Activated CD4-positive, alpha-beta memory T cell treated with anti-CD3 and anti-CD28 coated beads for 36 hours (primary cell): ENCODE measurements at regions of chr10 and their contacts with region 1.

Region 1: GRCh38 chr10:11170993-11171851 is 153.6 kb downstream of the CELF2 start:
- DNase-seq: peak; percentile 83
- H3K4me3 Mint-ChIP-seq: no peak overlapping the region
- H3K27ac Mint-ChIP-seq: no peak overlapping the region
- H3K4me1 Mint-ChIP-seq: peaks cover 39% of the 10 kb centered on the region
- H3K27me3 Mint-ChIP-seq: no peaks in the 10 kb centered on the region

Region 2: DNA sequence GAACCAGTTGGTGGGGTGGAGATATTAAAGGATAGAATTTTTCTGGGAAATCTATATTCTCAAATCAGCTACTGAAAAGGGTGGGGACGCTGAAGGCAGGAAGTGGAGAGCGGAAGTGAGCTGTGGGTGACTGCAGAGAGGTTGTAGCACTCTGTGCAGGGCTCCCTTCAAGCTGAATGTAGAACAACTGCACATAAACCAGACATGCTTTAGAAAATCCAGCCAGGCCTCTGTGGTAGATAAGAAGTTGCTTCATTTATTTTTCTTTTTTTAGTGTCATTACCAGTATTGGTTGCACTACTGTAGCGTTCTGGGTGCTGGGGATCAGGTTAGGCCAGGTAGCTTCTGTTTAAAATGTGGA is 25.7 kb before region 1 on chr10:
- CTCF ChIA-PET with region 1: interaction called, 96 read pairs
- POLR2A ChIA-PET with region 1: interaction called, 170 read pairs
- intact Hi-C with region 1: loop called (anchors 1 kb)
- DNase-seq: peak; percentile 78
- H3K4me3 Mint-ChIP-seq: peak overlapping the region; percentile 64
- H3K27ac Mint-ChIP-seq: peak overlapping the region; percentile 93
- H3K4me1 Mint-ChIP-seq: peaks cover 86% of the 10 kb centered on the region
- H3K27me3 Mint-ChIP-seq: no peaks in the 10 kb centered on the region

Region 3: GRCh38 chr10:11225935-11226334 is 54.7 kb after region 1 on chr10:
- CTCF ChIA-PET with region 1: interaction called, 9 read pairs
- POLR2A ChIA-PET with region 1: interaction called, 40 read pairs
- intact Hi-C with region 1: loop called (anchors 1 kb)
- DNase-seq: peak; percentile 88
- H3K4me3 Mint-ChIP-seq: peak overlapping the region; percentile 62
- H3K27ac Mint-ChIP-seq: peak overlapping the region; percentile 97
- H3K4me1 Mint-ChIP-seq: peaks cover 95% of the 10 kb centered on the region
- H3K27me3 Mint-ChIP-seq: no peaks in the 10 kb centered on the region

Region 4: DNA sequence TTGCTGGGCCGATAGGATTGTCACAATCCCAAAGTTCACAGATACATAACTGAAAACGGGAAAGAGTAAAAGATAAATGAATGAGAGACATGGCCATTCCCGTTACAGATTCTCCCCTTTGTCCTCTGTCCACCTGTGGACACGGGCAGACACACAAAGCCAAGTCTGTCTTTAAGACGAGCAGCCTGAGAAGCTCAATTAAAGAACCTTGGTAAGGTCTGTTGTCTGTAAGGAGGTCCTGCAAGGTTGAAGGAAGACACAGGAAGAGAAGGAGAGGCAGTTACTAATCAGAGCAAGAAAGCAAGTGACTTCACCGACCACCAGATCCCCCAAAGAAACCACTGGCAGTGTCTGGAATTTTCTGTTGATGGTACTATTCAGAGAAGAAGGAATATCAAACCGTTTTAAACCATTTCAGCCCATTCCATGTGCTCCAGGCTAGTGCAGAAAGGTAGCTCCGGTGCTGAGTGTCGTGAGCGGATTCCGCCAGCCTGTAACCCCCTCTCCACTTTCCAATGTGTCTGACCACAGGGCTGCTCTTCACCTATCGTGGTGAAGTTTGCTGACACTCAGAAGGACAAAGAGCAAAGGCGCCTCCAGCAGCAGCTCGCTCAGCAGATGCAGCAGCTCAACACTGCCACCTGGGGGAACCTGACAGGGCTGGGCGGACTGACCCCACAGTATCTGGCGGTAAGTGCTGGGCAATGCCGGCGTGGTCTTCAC is 99.1 kb after region 1 on chr10:
- CTCF ChIA-PET with region 1: interaction called, 33 read pairs
- POLR2A ChIA-PET with region 1: interaction called, 11 read pairs
- intact Hi-C with region 1: loop called (anchors 1 kb)
- DNase-seq: peak; percentile 85
- H3K4me3 Mint-ChIP-seq: peak overlapping the region; percentile 25
- H3K27ac Mint-ChIP-seq: peak overlapping the region; percentile 52
- H3K4me1 Mint-ChIP-seq: peaks cover 90% of the 10 kb centered on the region
- H3K27me3 Mint-ChIP-seq: no peaks in the 10 kb centered on the region